Activated CD4-positive, alpha-beta memory T cell treated with anti-CD3 and anti-CD28 coated beads, Interleukin-2, amount 10 ng/mL, durations not matched to agents 7 days and 5 days (primary cell): ENCODE measurements at regions of chr13 and their contacts with region 1.

Region 1: DNA sequence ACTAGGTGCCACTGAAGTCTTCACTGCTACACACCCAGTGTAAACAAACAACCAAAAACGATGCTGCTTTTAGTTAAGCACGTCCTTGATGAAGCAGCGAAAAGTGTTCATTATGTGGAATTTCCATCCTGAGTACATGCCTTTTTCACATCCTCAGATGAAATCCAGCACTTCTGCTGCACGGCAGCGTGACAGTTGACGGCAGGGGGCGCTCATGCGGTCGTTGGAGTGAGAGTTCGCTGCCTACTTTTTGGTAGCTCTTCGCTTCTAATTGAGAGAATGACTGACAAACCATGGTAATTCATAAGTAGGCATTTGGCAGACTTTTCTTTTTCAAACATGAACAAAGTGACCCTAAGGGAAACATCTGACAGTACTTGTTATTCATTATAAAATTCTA is 1124.9 kb downstream of the EFNB2 start:
- DNase-seq: peak; percentile 20
- H3K4me3 Mint-ChIP-seq: no peak overlapping the region
- H3K27ac Mint-ChIP-seq: no peak overlapping the region
- H3K4me1 Mint-ChIP-seq: no peaks in the 10 kb centered on the region
- H3K27me3 Mint-ChIP-seq: no peaks in the 10 kb centered on the region

Region 2: GRCh38 chr13:106536244-106537034 is 1125.8 kb after region 1 on chr13:
- CTCF ChIA-PET with region 1: interaction called, 13 read pairs
- POLR2A ChIA-PET with region 1: no interaction called
- DNase-seq: peak; percentile 85
- H3K4me3 Mint-ChIP-seq: peak overlapping the region; percentile 79
- H3K27ac Mint-ChIP-seq: peak overlapping the region; percentile 74
- H3K4me1 Mint-ChIP-seq: peaks cover 19% of the 10 kb centered on the region
- H3K27me3 Mint-ChIP-seq: peaks cover 25% of the 10 kb centered on the region